Activated CD4-positive, alpha-beta T cell treated with anti-CD3 and anti-CD28 coated beads, Interleukin-2, amount 10 ng/mL, durations not matched to agents 7 days and 5 days (primary cell): ENCODE measurements at regions of chr17 and their contacts with region 1.

Region 1: DNA sequence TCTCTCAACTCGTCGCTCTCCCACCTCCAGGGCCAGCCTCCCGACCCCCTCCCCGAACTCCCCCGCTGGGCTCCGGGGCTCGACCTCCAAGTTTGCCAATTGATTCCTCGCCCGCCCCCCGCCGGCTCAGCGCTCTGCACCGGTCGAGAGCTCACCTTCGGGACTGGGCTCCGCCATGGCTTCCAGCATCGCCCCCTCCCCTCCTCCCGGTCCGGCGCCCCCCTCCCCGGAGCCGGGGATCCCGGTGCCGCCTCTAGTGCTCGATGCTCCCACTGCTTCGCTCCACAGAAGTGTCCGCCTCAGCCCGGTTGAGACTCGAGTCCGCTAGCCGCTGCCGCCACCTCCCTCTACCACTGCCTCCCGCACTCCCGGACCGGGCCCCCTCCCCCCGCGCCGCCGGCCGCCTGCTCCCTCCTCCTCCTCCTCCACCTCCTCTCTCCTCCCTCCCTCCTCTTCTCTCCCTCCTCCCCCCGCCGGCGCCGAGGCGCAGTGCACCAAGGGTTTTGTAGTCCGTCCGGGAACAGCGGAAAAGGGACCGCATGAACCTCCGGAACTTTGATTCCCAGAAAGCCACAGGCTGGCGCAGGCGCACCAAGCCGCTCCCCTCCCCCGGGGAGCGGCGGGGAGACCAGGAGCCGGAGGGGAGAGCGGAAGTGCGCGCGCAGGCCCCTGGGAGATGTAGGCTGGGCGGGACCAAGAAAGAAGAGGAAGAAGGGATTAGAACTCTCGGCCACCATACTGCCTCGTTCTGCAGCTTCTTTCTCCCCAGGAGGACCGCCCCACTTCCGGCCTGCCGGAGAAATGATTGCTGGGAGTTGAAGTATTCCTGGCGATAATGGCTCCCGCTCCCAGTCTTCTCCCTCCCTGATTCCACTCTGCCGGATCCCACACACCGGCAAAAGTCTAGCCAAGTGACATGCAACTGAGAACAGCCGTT is at the start of gene PHF23:
- DNase-seq: peak; percentile 98
- H3K4me3 Mint-ChIP-seq: peak within 1 kb of the TSS; percentile 87
- H3K27ac Mint-ChIP-seq: peak within 1 kb of the TSS; percentile 93
- H3K4me1 Mint-ChIP-seq: peaks cover 68% of the 10 kb centered on the region
- H3K27me3 Mint-ChIP-seq: no peaks in the 10 kb centered on the region
- total RNA-seq, gene PHF23: 55.9 to 59.2 TPM

Region 2: GRCh38 chr17:7219812-7220581 is 19.4 kb before region 1 on chr17 and contains the starts of genes ACADVL and DLG4:
- CTCF ChIA-PET with region 1: interaction called, 20 read pairs
- POLR2A ChIA-PET with region 1: interaction called, 3 read pairs
- DNase-seq: peak; percentile 74
- H3K4me3 Mint-ChIP-seq: peak within 1 kb of the TSS; percentile 91
- H3K27ac Mint-ChIP-seq: peak within 1 kb of the TSS; percentile 89
- H3K4me1 Mint-ChIP-seq: peaks cover 56% of the 10 kb centered on the region
- H3K27me3 Mint-ChIP-seq: no peaks in the 10 kb centered on the region
- total RNA-seq, gene ACADVL: 338 to 370 TPM
- total RNA-seq, gene DLG4: 9.4 to 9.5 TPM

Region 3: DNA sequence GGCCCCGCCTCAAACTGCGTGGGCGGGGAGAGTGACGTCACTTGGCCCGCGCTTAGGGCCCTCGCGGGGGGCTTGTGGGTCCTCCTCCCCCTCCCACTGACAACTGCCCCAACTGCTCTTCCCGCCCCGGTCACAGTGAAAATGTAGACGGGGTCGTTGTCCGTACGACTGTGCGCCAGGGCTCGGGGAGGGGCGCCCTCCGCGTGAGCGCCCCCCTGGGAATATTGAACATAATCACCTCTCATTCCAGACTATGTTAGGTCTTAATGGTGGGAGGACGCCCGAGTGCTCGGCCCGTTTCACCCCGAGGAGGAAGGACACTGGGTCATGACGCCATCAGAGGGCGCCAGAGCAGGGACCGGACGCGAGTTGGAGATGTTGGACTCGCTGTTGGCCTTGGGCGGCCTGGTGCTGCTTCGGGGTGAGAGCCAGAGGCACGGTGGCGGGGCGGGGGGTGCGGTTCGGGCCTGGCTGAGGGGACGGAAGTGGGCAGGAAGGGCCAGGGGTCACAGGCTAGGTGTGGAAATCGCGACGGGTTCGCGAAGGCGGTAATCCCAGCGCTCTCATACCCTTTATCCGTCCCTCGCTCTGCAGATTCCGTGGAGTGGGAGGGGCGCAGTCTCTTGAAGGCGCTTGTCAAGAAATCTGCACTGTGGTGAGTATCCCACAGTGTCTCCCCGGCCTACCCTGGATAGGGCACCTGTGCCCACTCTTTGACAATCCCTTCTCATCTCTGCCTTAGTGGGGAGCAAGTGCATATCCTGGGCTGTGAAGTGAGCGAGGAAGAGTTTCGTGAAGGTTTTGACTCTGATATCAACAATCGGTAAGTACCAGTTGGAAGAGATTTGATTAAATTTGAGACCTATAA is 13.1 kb after region 1 on chr17 and contains the start of gene ELP5:
- CTCF ChIA-PET with region 1: interaction called, 11 read pairs
- POLR2A ChIA-PET with region 1: no interaction called
- DNase-seq: peak; percentile 93
- H3K4me3 Mint-ChIP-seq: peak within 1 kb of the TSS; percentile 95
- H3K27ac Mint-ChIP-seq: peak within 1 kb of the TSS; percentile 99
- H3K4me1 Mint-ChIP-seq: peaks cover 47% of the 10 kb centered on the region
- H3K27me3 Mint-ChIP-seq: no peaks in the 10 kb centered on the region
- total RNA-seq, gene ELP5: 41.7 to 42.4 TPM

Region 4: GRCh38 chr17:7426896-7427489 is 187.6 kb after region 1 on chr17:
- CTCF ChIA-PET with region 1: no interaction called
- POLR2A ChIA-PET with region 1: no interaction called
- DNase-seq: no peak
- H3K4me3 Mint-ChIP-seq: no peak overlapping the region
- H3K27ac Mint-ChIP-seq: no peak overlapping the region
- H3K4me1 Mint-ChIP-seq: no peaks in the 10 kb centered on the region
- H3K27me3 Mint-ChIP-seq: no peaks in the 10 kb centered on the region